Natural killer cell (primary cell): ENCODE measurements at regions of chr20 and their contacts with region 1.

Region 1: DNA sequence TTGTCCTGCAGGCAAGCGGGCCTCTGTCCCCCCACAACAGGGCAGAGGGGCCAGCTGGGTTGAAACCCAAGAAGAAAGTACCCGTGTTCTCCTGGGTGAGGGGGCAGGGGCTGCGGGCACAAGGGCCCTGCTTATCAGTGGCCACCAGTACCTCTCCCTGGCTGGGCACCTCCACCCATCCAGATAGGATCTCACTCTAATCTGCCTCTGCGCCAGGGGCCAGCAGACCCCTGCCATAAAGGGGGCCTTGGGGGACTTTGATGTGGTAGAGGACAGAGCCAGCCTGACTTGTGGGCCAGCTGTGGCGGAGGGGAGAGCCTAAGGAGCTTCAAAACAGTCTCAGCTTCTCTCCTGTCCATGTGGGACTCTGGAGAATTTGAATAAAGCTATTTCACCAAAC is 28.1 kb downstream of the PREX1 start:
- DNase-seq: no peak
- ATAC-seq: peak in 1 of 3 donors; percentile 21
- H3K4me3 ChIP-seq: no peak overlapping the region
- H3K4me3 Mint-ChIP-seq: peak overlapping the region; percentile 72
- H3K27ac ChIP-seq: peak overlapping the region; percentile 21
- H3K27ac Mint-ChIP-seq: peak overlapping the region; percentile 87 to 92
- H3K4me1 ChIP-seq: peaks cover 90% of the 10 kb centered on the region
- H3K4me1 Mint-ChIP-seq: peaks cover 77 to 83% of the 10 kb centered on the region in 2 donors
- H3K27me3 ChIP-seq: no peaks in the 10 kb centered on the region
- H3K27me3 Mint-ChIP-seq: no peaks in the 10 kb centered on the region
- CTCF ChIP-seq: no peak

Region 2: GRCh38 chr20:48818407-48818987 is 18.8 kb after region 1 on chr20:
- intact Hi-C with region 1: loop called (anchors 2 kb)
- DNase-seq: peak in 1 of 2 donors; percentile 68
- ATAC-seq: peak; percentile 10 to 24 (median 17)
- H3K4me3 ChIP-seq: no peak overlapping the region
- H3K4me3 Mint-ChIP-seq: peak overlapping the region; percentile 99
- H3K27ac ChIP-seq: peak overlapping the region; percentile 75
- H3K27ac Mint-ChIP-seq: no peak overlapping the region
- H3K4me1 ChIP-seq: peaks cover 93% of the 10 kb centered on the region
- H3K4me1 Mint-ChIP-seq: peaks cover 73% of the 10 kb centered on the region in 2 donors
- H3K27me3 ChIP-seq: no peaks in the 10 kb centered on the region
- H3K27me3 Mint-ChIP-seq: no peaks in the 10 kb centered on the region
- CTCF ChIP-seq: no peak